GM13977 (cell line): ENCODE measurements at regions of chr6 and their contacts with region 1.

Region 1: DNA sequence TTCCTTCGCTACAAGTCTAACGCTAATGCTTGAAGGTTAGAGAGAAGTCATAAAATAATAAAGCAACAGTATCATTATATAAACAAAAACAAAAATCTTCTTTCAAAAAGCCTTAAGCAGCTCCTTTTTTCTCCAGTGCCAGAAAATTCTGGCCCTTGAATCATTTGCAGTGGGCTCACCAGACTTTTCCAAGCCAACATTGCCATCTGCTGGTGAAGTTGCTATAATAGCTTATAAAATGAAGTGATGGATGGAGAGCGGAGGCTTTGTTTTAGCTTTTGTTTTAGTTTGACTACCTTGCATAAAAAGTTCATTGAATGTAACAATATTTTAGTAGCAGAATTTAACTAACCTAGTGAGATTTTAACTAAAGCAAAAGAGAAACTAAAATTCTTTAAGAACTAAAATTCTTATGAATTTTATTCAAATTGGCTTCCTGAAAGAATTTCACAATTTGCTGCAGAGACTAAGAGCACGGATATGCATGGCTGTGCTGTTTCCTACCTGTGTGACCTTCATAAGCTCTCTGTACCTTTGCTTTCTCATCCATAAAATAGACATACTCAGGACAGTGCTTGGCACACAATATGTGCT is 44.8 kb upstream of the SLC2A12 start:
- DNase-seq: peak; percentile 57
- CTCF ChIP-seq: peak; percentile 61

Region 2: GRCh38 chr6:133568970-133569889 is 528.0 kb before region 1 on chr6:
- in situ Hi-C with region 1: loop called (anchors 25 kb)
- DNase-seq: peak; percentile 41
- CTCF ChIP-seq: peak; percentile 50

Region 3: GRCh38 chr6:133923938-133924593 is 173.1 kb before region 1 on chr6:
- in situ Hi-C with region 1: loop called (anchors 10 kb)
- DNase-seq: peak; percentile 59
- CTCF ChIP-seq: peak; percentile 85